Natural killer cell (primary cell): ENCODE measurements at regions of chr2 and their contacts with region 1.

Region 1: DNA sequence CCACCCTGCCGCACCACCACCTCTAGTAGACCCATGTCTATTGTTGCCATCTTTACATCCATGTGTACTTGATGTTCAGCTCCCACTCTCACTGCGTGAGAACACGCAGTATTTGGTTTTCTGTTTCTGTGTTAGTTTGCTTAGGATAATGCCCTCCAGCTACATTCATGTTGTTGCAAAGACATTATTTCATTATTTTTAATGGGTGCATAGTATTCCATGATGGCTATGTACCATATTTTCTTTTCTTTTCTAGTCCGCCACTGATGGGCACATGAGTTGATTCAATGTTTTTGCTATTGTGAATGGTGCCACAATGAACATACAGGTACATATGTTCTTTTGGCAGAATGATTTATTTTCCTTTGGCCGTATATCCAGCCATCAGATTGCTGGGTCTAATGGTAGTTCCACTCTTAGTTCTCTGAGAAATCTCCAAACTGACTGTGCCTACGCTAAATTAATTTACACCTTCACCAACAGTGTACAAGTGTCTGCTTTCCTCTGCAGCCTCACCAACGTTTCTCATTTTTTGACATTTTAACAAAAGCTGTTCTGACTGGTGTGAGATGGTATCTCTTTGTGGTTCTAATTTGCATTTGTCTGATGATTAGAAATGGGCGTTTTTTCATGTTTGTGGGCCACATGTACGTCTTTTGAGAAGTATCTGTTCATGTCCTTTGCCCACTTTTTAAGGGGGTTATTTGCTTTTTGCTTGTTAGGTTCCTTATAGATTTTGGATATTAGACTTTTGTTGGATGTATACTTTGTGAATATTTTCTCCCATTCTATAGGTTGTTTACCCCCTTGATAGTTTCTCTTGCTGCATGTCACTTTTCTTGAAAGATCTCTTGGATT is 10.5 kb upstream of the ZNF513 start:
- DNase-seq: peak in 1 of 2 donors; percentile 75
- ATAC-seq: peak; percentile 82 to 89 (median 87)
- H3K4me3 ChIP-seq: no peak overlapping the region
- H3K4me3 Mint-ChIP-seq: peak overlapping the region; percentile 79
- H3K27ac ChIP-seq: peak overlapping the region; percentile 76
- H3K27ac Mint-ChIP-seq: peak overlapping the region; percentile 93 to 97
- H3K4me1 ChIP-seq: peaks cover 9% of the 10 kb centered on the region
- H3K4me1 Mint-ChIP-seq: peaks cover 15 to 25% of the 10 kb centered on the region in 2 donors
- H3K27me3 ChIP-seq: no peaks in the 10 kb centered on the region
- H3K27me3 Mint-ChIP-seq: no peaks in the 10 kb centered on the region
- CTCF ChIP-seq: no peak

Region 2: DNA sequence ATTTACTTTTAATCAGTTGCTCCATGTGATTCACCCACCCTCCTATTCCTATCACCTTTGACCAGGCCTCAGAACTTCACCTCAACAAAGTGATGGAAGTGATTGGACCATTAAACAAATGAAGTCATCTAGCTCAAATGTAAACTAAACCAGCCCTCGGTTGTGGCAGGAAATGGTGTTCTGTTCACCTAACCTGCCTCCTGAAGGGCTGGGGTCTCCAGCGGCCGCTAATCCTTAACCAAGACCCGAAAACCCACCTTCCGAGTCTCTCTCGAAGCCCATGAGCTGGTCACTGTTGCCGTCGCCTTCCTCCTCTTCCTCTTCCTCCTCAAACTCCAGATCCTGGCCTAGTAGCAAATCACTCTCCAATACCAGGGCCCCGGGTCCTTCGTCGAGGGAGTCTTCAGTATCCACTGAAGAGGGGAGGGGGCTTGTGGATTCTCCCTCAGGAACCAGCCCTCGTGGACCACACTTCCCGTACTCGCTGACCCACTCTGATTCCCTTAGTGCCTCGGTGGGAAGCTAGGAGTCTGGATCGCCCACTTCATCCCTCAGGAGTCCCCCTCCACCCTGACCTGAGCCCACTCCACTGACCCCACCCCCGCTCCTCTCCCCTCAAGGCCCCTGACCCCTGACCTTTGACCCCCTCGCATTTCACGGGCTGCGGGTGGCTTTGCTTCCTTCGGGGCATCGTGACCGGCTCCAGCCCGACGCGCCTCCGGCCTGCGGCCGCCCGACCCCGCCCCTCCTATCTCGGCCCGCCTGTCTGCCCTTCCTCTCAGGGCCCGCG is 11.0 kb before region 1 on chr2:
- intact Hi-C with region 1: no loop called
- DNase-seq: peak in 1 of 2 donors; percentile 64
- ATAC-seq: peak in 2 of 3 donors; percentile 43 to 60
- H3K4me3 ChIP-seq: peak overlapping the region; percentile 50
- H3K4me3 Mint-ChIP-seq: peak overlapping the region; percentile 89
- H3K27ac ChIP-seq: peak overlapping the region; percentile 92
- H3K27ac Mint-ChIP-seq: peak overlapping the region; percentile 91 to 97
- H3K4me1 ChIP-seq: peaks cover 18% of the 10 kb centered on the region
- H3K4me1 Mint-ChIP-seq: peaks cover 25% of the 10 kb centered on the region in 2 donors
- H3K27me3 ChIP-seq: no peaks in the 10 kb centered on the region
- H3K27me3 Mint-ChIP-seq: no peaks in the 10 kb centered on the region
- CTCF ChIP-seq: no peak

Region 3: DNA sequence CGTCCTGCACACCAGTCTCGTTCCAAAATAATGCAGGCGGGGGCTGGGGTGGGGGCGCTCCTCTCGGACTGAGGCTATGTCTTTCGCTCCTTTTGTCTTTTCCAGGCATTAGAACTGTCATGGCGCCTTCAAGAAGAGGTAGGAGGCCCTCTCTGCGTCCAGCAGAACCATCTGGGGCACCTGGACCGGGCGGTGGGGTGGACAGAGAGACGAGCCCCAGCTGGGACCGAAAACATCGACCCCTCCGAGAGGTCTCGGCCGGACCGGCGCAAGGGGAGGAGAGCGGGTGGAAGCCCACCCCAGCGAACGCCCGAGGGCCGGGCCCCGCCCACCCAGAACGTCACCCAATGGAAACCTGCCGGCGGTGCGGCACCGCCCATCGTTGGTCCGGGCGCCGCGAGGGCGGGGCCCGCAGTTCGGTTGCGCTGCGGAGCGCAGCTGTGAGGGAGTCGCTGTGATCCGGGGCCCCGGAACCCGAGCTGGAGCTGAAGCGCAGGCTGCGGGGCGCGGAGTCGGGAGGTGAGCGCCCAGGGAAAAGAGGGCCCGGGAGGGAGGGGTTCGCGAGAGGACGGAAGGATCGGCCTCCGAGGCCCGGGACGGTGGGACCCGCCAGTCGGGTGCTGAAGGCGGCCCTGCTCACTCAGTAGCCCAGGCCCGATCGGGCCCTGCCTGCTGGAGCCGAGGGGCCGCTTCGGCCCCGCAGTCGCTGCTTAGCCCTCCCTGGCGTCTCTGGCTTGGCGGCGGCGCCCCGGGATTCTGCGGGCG is 37.3 kb after region 1 on chr2 and contains the start of gene NRBP1:
- intact Hi-C with region 1: loop called (anchors 5 kb)
- DNase-seq: peak; percentile 94 to 95
- ATAC-seq: peak; percentile 84 to 97 (median 90)
- H3K4me3 ChIP-seq: peak within 1 kb of the TSS; percentile 69
- H3K4me3 Mint-ChIP-seq: peak within 1 kb of the TSS; percentile 95
- H3K27ac ChIP-seq: peak within 1 kb of the TSS; percentile 78
- H3K27ac Mint-ChIP-seq: peak within 1 kb of the TSS; percentile 94 to 97
- H3K4me1 ChIP-seq: peaks cover 28% of the 10 kb centered on the region
- H3K4me1 Mint-ChIP-seq: peaks cover 42 to 45% of the 10 kb centered on the region in 2 donors
- H3K27me3 ChIP-seq: no peaks in the 10 kb centered on the region
- H3K27me3 Mint-ChIP-seq: no peaks in the 10 kb centered on the region
- CTCF ChIP-seq: no peak
- total RNA-seq, gene NRBP1: 240 to 278 (median 262) TPM